Upper lobe of right lung (tissue), 1 donor: ENCODE measurements at regions of chr20 and their contacts with region 1.

Region 1: GRCh38 chr20:7057611-7058010 is 290.1 kb downstream of the BMP2 start:
- DNase-seq: no peak
- ATAC-seq: no peak
- H3K4me3 ChIP-seq: no peak overlapping the region
- H3K27ac ChIP-seq: no peak overlapping the region
- H3K4me1 ChIP-seq: no peaks in the 10 kb centered on the region
- H3K27me3 ChIP-seq: no peaks in the 10 kb centered on the region
- CTCF ChIP-seq: no peak

Region 2: DNA sequence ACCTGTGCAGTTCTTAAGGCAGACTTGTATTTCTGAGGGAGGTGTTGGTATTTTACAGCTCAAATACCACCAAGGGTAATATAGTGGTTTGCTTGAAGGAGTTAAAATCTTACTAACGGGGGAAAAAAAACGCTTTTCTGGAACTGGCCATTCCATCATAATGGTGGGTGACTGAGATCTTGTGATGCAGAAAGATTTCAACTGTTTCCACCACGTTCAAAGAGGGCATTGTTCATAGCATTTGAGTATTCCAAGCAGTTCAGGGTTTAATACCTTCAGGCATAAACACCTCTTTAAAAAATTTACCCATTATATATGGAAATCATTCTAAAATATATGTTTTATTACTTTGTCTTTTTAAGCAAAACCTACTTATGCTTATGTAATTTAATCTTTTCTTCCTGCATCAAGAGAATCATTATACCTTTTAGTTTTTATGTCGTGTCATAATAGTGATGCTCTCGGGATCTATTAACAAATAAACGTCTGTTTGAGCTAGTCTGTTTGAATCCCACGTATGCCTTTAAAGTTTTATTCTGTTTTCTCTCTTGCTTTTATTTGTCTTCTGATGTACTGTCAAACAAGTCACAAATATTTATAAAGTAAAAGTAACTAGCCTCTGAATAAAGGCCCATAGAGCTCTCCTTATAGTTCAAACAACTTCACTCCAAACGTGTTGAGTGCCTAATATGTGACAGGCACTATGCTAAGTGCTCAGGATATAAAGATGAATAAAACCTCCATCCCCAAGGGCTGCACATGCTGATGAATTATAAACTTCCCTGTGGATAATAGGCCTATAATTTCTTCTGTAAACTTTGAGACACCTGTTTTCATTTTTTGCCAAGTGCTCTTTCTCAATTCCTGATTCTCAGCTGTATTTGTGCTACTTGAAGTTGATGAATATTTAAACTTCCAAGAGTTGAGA is 636.0 kb before region 1 on chr20:
- intact Hi-C with region 1: loop called (anchors 5 kb)
- DNase-seq: no peak
- ATAC-seq: no peak
- H3K4me3 ChIP-seq: no peak overlapping the region
- H3K27ac ChIP-seq: no peak overlapping the region
- H3K4me1 ChIP-seq: no peaks in the 10 kb centered on the region
- H3K27me3 ChIP-seq: no peaks in the 10 kb centered on the region
- CTCF ChIP-seq: no peak

Region 3: GRCh38 chr20:7274870-7275269 is 217.3 kb after region 1 on chr20:
- intact Hi-C with region 1: no loop called
- DNase-seq: no peak
- ATAC-seq: no peak
- H3K4me3 ChIP-seq: no peak overlapping the region
- H3K27ac ChIP-seq: no peak overlapping the region
- H3K4me1 ChIP-seq: no peaks in the 10 kb centered on the region
- H3K27me3 ChIP-seq: no peaks in the 10 kb centered on the region
- CTCF ChIP-seq: no peak